ENCODE measurements at regions of chr5 and their contacts with region 1.

Region 1: GRCh38 chr5:148957591-148958202 is 105.2 kb downstream of the SH3TC2 start:
- DNase-seq: peak; percentile 79
- H3K4me3 Mint-ChIP-seq: no peak overlapping the region
- H3K27ac Mint-ChIP-seq: no peak overlapping the region
- H3K4me1 Mint-ChIP-seq: peaks cover 68% of the 10 kb centered on the region
- H3K27me3 Mint-ChIP-seq: no peaks in the 10 kb centered on the region
- CTCF ChIP-seq: peak; percentile 93

Region 2: DNA sequence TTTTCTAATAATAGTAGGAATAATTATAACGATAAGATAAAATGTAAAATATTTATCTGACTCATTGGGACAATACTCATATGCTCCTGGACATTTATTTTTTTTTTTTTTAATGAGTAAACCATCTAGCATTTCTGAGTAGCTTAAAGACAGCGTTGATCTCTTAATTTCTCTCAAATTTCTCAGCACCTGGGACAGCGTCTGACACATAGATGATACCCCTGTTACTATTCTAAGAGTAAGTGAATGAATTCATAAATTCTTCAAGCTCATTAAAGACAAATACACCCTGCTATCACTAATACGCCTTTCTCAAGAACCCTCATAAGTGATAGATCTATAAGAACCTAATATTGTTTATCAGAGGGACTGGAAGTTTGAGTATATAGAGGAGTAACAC is 291.3 kb before region 1 on chr5:
- CTCF ChIA-PET with region 1: no interaction called
- intact Hi-C with region 1: no loop called
- DNase-seq: no peak
- H3K4me3 Mint-ChIP-seq: no peak overlapping the region
- H3K27ac Mint-ChIP-seq: no peak overlapping the region
- H3K4me1 Mint-ChIP-seq: no peaks in the 10 kb centered on the region
- H3K27me3 Mint-ChIP-seq: peaks cover 65% of the 10 kb centered on the region
- CTCF ChIP-seq: no peak

Region 3: GRCh38 chr5:148820461-148821395 is 137.0 kb before region 1 on chr5:
- CTCF ChIA-PET with region 1: interaction called, 10 read pairs
- intact Hi-C with region 1: no loop called
- DNase-seq: peak; percentile 64
- H3K4me3 Mint-ChIP-seq: no peak overlapping the region
- H3K27ac Mint-ChIP-seq: no peak overlapping the region
- H3K4me1 Mint-ChIP-seq: no peaks in the 10 kb centered on the region
- H3K27me3 Mint-ChIP-seq: no peaks in the 10 kb centered on the region
- CTCF ChIP-seq: peak; percentile 61

Region 4: GRCh38 chr5:148826053-148826738 is 131.5 kb before region 1 on chr5 and contains the start of gene ADRB2:
- CTCF ChIA-PET with region 1: interaction called, 10 read pairs
- intact Hi-C with region 1: loop called (anchors 2 kb)
- DNase-seq: peak; percentile 99
- H3K4me3 Mint-ChIP-seq: peak within 1 kb of the TSS; percentile 88
- H3K27ac Mint-ChIP-seq: peak within 1 kb of the TSS; percentile 79
- H3K4me1 Mint-ChIP-seq: peaks cover 16% of the 10 kb centered on the region
- H3K27me3 Mint-ChIP-seq: no peaks in the 10 kb centered on the region
- CTCF ChIP-seq: no peak
- total RNA-seq, gene ADRB2: 16.6 and 16.9 TPM in 2 replicates

Region 5: DNA sequence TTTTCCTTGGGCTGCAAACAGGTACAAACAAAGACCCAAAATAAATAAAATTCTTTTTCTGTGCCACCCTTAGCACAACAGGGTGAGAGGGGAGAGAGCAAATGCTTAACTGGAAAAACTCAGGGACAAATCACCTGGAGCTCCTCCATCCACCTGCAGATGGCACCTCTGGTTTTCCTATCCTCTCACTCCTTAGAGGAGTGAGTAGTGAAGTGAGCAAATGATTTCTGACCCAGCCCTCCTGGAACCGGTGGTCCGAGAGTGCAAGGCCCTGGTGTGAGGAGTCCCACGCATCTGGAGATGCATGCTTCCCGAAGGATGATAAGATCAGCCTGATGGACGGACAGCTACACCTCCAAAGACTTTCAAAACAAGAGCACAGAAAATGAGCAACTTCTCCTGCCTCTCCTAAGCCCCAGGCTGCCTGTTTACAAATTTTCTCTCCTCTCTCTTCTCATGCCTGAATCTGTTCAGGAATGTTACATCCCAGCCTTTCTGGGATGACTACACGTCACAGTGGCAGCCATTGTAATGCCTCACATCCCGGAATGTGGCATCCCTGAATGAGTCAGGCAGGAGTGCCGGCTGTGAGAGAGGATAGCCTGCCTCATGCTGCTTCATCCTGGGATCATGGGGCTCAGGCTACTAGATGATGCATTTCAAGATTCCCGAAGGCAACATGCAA is 44.8 kb before region 1 on chr5:
- CTCF ChIA-PET with region 1: interaction called, 54 read pairs
- intact Hi-C with region 1: loop called (anchors 1 kb)
- DNase-seq: peak; percentile 68
- H3K4me3 Mint-ChIP-seq: no peak overlapping the region
- H3K27ac Mint-ChIP-seq: peak overlapping the region; percentile 93
- H3K4me1 Mint-ChIP-seq: peaks cover 89% of the 10 kb centered on the region
- H3K27me3 Mint-ChIP-seq: no peaks in the 10 kb centered on the region
- CTCF ChIP-seq: peak; percentile 28

Region 6: DNA sequence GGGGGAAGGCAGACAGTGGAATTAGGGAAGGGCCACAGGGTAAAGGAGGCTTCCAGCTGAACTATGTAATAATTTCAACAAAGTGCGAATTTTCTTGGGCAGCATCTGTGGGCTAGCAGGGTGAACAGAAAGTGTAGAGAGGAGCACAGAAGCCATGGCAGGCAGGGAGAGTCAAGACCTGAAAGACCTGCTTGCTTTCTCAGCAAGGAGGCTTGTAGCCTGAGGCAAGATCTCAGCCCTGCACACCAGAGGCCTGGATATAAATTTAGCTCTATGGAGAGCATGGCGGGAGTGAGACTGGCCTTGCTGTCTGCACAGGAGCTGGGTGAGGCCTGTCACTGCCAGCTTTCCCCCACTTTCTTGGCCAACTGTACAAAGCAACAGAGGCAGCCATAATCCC is 137.3 kb after region 1 on chr5:
- CTCF ChIA-PET with region 1: no interaction called
- intact Hi-C with region 1: no loop called
- DNase-seq: no peak
- H3K4me3 Mint-ChIP-seq: no peak overlapping the region
- H3K27ac Mint-ChIP-seq: no peak overlapping the region
- H3K4me1 Mint-ChIP-seq: no peaks in the 10 kb centered on the region
- H3K27me3 Mint-ChIP-seq: no peaks in the 10 kb centered on the region
- CTCF ChIP-seq: no peak